Left ventricle myocardium inferior (tissue), 1 donor: ENCODE measurements at regions of chr17 and their contacts with region 1.

Region 1: DNA sequence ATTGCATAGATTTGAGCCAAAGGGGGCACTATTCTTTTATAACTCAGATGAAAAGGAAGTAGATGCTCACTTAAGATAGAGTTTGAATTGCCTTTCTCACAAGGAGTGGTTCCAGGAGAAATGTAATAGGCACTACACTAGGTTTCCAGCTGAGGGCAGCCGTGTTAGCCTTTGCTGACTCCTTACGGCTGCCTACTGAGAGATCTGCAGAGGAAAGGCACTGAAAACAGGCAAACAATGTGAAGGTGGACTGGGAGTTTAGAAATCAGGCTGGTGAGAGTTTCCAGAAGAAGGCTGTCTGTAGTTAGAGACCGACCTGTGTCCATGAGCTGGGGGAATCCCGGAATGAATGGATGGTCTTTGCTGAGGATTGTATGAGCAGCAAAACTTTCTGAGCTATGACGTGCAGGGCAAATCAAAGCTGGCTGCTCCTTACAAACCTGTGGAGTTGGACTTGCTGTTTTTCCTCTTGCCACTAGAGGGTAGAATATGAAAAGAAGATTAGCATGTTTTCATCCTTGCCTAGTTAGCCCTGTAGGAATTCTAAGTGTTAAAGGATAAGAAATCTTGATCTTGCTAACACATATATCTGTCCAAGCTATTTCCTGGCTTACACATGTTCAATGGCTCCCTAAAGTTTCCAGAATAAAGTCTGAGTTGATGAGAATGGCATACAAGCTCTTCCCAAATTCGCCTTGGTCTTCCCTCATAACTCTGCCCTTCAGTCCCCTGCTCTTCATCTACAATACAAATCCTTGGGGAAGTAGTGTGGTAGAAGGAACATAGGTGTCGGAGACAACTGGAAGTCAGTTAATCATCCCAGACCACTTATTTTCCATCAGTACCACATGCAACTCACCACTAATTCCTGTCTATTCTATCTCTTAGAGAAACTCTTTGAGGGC is 20.1 kb upstream of the TAOK1 start:
- DNase-seq: peak; percentile 28
- H3K4me3 ChIP-seq: peak overlapping the region; percentile 38
- H3K27ac ChIP-seq: peak overlapping the region; percentile 75
- H3K4me1 ChIP-seq: peaks cover 20% of the 10 kb centered on the region
- H3K27me3 ChIP-seq: no peaks in the 10 kb centered on the region
- CTCF ChIP-seq: peak; percentile 79

Region 2: GRCh38 chr17:29533976-29534375 is 163.9 kb after region 1 on chr17:
- intact Hi-C with region 1: loop called (anchors 5 kb)
- DNase-seq: no peak
- H3K4me3 ChIP-seq: no peak overlapping the region
- H3K27ac ChIP-seq: no peak overlapping the region
- H3K4me1 ChIP-seq: no peaks in the 10 kb centered on the region
- H3K27me3 ChIP-seq: no peaks in the 10 kb centered on the region
- CTCF ChIP-seq: no peak